Caco-2 (cell line): ENCODE measurements at regions of chr5 and their contacts with region 1.

Region 1: DNA sequence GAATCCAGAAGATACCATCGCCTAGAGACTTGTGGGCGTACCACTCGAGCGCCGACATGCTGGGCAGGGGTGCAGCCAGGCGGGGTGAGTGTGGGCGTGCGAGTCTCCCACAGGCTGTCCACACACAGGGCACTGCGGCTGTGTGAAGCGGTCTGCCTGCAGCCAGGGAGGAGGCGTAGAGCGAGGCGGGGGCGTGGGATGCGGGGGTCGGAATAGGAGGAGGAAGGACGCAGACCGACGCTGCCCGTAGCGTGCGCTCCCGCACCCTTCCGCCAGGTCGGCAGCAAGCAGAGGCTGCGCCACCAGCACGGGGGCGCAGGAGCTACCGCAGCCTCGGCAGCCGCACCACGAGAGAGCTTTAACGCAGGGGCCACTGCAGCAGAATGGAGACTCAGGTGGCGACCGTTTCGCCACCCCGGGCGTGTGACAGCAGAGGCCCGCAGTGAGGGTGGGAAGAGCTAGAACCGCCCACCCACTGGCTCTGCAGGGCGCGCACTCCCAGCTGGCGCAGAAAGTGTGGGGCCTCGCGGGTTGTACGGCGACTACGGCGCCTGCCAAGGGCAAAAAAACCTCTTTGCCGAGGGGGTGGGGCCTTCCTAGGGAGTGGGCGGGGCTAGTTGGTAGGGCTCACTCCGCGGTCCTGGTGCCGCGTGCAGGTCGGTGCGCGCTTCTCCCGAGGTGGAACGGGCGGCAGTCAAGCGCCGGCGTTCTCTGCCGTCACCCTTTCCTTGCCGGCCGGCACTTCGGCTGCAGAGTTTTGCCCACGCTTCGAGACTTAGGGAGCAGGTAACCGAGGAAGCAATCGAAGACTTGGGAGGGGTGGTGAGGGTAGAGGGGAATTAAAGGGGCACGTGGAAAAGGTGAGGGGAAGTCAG is at the starts of genes MBLAC2 and POLR3G:
- DNase-seq: peak; percentile 95 to 96
- H3K4me3 ChIP-seq: peak within 1 kb of the TSS; percentile 94
- H3K4me3 Mint-ChIP-seq: peak within 1 kb of the TSS; percentile 94
- H3K27ac Mint-ChIP-seq: peak within 1 kb of the TSS; percentile 93
- H3K4me1 ChIP-seq: peaks cover 7% of the 10 kb centered on the region; the same call in 1 of the 2 replicates
- H3K4me1 Mint-ChIP-seq: peaks cover 12% of the 10 kb centered on the region
- H3K27me3 ChIP-seq: no peaks in the 10 kb centered on the region
- H3K27me3 Mint-ChIP-seq: no peaks in the 10 kb centered on the region
- CTCF ChIP-seq: peak; percentile 44 to 69
- total RNA-seq, gene MBLAC2: 3.8 and 4.9 TPM in 2 replicates
- total RNA-seq, gene POLR3G: 4.5 and 5.4 TPM in 2 replicates

Region 2: GRCh38 chr5:90409318-90410177 is 64.9 kb before region 1 on chr5 and contains the start of gene CETN3:
- CTCF ChIA-PET with region 1: interaction called, 4 read pairs
- POLR2A ChIA-PET with region 1: interaction called, 11 read pairs
- intact Hi-C with region 1: loop called (anchors 1 kb)
- DNase-seq: peak; percentile 96 to 97
- H3K4me3 ChIP-seq: peak within 1 kb of the TSS; percentile 82
- H3K4me3 Mint-ChIP-seq: no peak within 1 kb of the TSS
- H3K27ac Mint-ChIP-seq: no peak within 1 kb of the TSS
- H3K4me1 ChIP-seq: peaks cover 9% of the 10 kb centered on the region; the same call in 1 of the 2 replicates
- H3K4me1 Mint-ChIP-seq: peaks cover 14% of the 10 kb centered on the region
- H3K27me3 ChIP-seq: no peaks in the 10 kb centered on the region
- H3K27me3 Mint-ChIP-seq: no peaks in the 10 kb centered on the region
- CTCF ChIP-seq: peak in 1 of 2 experiments; percentile 22
- total RNA-seq, gene CETN3: 38.5 and 42.7 TPM in 2 replicates

Region 3: DNA sequence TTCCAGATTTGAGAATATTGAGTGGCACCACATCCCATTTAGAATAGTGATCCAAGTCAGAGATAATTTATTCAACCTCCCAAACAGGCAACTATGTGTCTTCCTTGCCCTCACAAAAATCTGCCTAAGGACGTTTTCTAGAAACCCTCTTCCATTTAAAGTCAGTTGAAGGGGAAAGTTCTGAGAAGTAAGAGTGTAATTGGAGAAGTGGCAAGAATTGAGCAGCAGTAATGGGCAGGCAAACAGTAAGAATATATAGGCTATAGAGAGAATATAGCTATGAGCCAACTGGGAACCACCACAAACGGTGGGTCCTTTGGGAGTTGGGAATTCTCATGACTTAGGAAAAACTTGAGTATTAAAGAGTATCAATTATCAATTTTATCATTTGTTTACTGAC is 33.8 kb before region 1 on chr5:
- CTCF ChIA-PET with region 1: interaction called, 8 read pairs
- POLR2A ChIA-PET with region 1: no interaction called
- intact Hi-C with region 1: loop called (anchors 2 kb)
- DNase-seq: no peak
- H3K4me3 ChIP-seq: no peak overlapping the region
- H3K4me3 Mint-ChIP-seq: peak overlapping the region; percentile 72
- H3K27ac Mint-ChIP-seq: peak overlapping the region; percentile 50
- H3K4me1 ChIP-seq: peaks cover 12% of the 10 kb centered on the region
- H3K4me1 Mint-ChIP-seq: peaks cover 6% of the 10 kb centered on the region
- H3K27me3 ChIP-seq: no peaks in the 10 kb centered on the region
- H3K27me3 Mint-ChIP-seq: peaks cover 3% of the 10 kb centered on the region
- CTCF ChIP-seq: no peak

Region 4: GRCh38 chr5:90606539-90606938 is 132.1 kb after region 1 on chr5:
- CTCF ChIA-PET with region 1: no interaction called
- POLR2A ChIA-PET with region 1: no interaction called
- intact Hi-C with region 1: loop called (anchors 1 kb)
- DNase-seq: peak in 1 of 2 experiments; percentile 5
- H3K4me3 ChIP-seq: no peak overlapping the region
- H3K4me3 Mint-ChIP-seq: no peak overlapping the region
- H3K27ac Mint-ChIP-seq: no peak overlapping the region
- H3K4me1 ChIP-seq: no peaks in the 10 kb centered on the region
- H3K4me1 Mint-ChIP-seq: peaks cover 6% of the 10 kb centered on the region
- H3K27me3 ChIP-seq: no peaks in the 10 kb centered on the region; the same call in 1 of the 2 replicates
- H3K27me3 Mint-ChIP-seq: peaks cover 9% of the 10 kb centered on the region
- CTCF ChIP-seq: peak; percentile 37 to 52